GM10248 (cell line): ENCODE measurements at regions of chr5 and their contacts with region 1.

Region 1: DNA sequence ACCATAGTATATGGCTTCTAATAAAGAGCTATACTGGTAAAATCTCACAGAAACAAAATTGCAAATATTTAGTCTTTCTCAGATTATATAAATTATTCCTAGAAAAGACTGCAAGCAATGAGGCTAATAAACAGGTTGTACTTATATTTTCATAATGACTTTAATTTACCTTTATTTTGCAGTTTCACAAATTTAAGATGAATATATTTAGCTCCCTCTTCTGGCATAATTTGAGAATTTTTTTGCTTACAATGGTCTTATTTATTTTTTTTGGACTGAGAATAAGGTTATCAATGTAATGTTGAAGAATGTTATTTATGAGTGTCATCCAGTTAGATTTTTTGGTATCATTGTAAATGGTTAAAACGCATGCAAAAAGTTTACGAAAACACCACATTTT is 56.7 kb downstream of the PIK3R1 start:
- DNase-seq: no peak
- CTCF ChIP-seq: peak; percentile 23

Region 2: DNA sequence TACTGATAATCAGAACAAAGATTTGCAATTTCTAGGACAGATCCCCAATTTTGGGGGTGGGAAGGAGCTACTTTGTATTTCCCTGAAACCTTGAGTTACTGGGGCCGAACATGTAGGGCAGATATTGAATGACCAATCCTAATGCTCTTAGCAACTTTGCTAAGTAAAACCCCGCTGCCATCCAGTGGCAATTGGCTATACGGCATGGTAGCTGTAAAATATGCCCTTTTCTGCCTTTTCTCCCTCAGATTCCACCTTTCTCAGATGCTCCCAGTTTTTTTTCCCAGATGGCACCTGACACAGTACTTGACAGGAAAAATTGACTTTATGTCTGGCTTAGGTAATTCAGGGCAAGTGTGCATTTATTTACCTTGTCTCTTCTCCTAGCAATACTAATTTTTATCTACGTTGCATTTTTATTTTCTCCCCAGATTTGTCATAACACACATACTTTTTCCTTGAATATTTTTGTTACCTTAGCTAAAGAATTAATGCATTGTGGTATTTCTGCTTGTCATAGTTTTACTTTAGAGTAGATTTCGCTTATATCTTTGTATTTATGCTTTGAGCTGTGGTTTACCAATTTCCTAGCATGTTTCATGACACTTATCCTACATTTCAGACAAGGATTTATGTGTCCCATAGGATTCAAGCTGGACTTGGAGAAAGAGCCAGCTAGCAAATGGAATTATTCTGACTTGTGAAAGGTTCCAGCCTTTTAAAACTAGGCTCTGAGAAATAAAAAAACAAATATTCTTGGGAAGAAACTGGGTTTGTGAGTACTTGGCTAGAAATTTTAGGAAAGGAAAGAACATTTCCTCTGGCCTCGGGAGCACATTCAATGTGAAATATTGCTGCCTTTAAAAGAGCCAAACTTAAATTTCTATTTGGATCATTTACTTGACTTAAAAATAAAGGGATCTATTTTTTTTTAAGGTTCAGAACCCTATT is 19.3 kb before region 1 on chr5:
- CTCF ChIA-PET with region 1: interaction called, 38 read pairs
- POLR2A ChIA-PET with region 1: no interaction called
- DNase-seq: peak; percentile 49
- CTCF ChIP-seq: peak; percentile 74

Region 3: DNA sequence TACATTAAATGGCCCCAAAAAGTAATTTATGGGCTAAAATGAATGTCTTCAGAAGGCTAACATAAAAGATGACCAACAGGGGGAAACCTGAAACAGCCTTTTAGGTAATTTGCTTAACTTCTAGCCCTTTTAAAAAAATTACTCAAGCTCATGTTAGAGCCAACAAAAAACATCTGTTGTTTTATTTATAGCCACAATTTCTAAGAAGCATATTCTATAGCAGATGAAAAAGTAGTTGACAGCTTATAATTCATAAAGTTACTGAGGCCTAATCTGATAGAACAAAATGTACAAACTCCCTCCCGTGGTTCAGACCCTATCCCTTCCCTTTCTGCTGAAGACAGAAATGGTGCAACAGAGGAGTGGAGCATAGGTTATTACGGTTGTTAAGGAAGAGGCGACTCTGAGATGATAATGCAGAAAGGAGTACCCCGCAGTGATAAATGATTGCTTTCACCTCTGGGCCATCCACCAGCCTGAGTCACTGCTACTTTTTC is 10.7 kb before region 1 on chr5:
- CTCF ChIA-PET with region 1: interaction called, 20 read pairs
- POLR2A ChIA-PET with region 1: no interaction called
- DNase-seq: no peak
- CTCF ChIP-seq: peak; percentile 31

Region 4: GRCh38 chr5:68304421-68305052 is 32.2 kb after region 1 on chr5:
- CTCF ChIA-PET with region 1: no interaction called
- POLR2A ChIA-PET with region 1: no interaction called
- DNase-seq: no peak
- CTCF ChIP-seq: no peak

Region 5: GRCh38 chr5:68644971-68645370 is 372.7 kb after region 1 on chr5:
- CTCF ChIA-PET with region 1: no interaction called
- POLR2A ChIA-PET with region 1: no interaction called
- DNase-seq: peak; percentile 30
- CTCF ChIP-seq: no peak